Aorta (tissue), 5 donors: ENCODE measurements at regions of chr5 and their contacts with region 1.

Region 1: GRCh38 chr5:54492178-54492577 is 25.4 kb upstream of the SNX18 start:
- DNase-seq: no peak
- ATAC-seq: no peak
- H3K4me3 ChIP-seq: no peak overlapping the region
- H3K27ac ChIP-seq: no peak overlapping the region
- H3K4me1 ChIP-seq: no peaks in the 10 kb centered on the region
- H3K27me3 ChIP-seq: no peaks in the 10 kb centered on the region

Region 2: GRCh38 chr5:54243473-54244080 is 248.6 kb before region 1 on chr5:
- intact Hi-C with region 1: loop called (anchors 5 kb)
- DNase-seq: no peak
- ATAC-seq: no peak
- H3K4me3 ChIP-seq: no peak overlapping the region
- H3K27ac ChIP-seq: no peak overlapping the region
- H3K4me1 ChIP-seq: no peaks in the 10 kb centered on the region
- H3K27me3 ChIP-seq: no peaks in the 10 kb centered on the region

Region 3: DNA sequence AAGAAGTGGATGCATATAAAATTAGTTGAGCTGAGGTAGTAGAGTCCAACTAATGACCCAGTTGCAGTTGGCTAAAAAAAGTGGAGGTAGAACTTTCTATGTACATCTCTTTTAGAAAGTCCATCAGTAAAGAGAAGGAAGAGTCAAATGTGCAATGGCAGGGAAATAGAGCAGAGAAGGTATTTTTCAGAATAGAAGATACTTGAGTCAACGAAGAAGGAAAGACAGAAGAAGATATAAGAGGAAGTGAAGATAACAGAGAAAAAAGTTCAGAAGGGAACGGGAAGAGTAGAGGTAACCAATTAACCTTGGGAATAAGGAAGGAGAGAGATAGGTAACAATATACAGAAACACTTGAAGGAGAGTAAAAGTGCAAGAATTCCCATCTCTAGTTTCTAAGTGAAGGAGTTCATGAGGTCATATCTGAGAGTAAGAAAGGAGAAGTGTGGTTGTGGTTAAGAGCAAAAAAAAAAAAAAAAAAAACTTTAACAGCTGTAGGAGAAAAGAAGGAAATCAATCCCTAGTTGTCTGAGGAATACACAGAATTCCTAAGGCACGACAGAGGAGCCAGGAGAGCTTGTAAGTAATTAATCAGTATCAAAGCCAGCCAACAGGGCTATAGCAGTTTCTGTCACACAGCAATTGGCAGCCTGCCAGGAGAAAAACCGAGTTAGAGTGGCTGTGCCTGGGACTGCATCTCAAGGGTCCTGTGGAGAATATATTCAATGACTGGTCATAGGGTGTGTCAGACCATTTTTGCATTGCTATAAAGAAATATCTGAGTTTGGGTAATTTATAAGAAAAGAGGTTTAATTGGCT is 242.8 kb before region 1 on chr5:
- intact Hi-C with region 1: loop called (anchors 5 kb)
- DNase-seq: peak in 1 of 2 donors; percentile 48
- ATAC-seq: no peak
- H3K4me3 ChIP-seq: no peak overlapping the region
- H3K27ac ChIP-seq: no peak overlapping the region
- H3K4me1 ChIP-seq: no peaks in the 10 kb centered on the region
- H3K27me3 ChIP-seq: no peaks in the 10 kb centered on the region

Region 4: GRCh38 chr5:54443270-54443669 is 48.9 kb before region 1 on chr5:
- intact Hi-C with region 1: loop called in 1 of 2 experiments (anchors 2 kb)
- DNase-seq: no peak
- ATAC-seq: no peak
- H3K4me3 ChIP-seq: no peak overlapping the region
- H3K27ac ChIP-seq: no peak overlapping the region
- H3K4me1 ChIP-seq: peaks cover 2 to 7% of the 10 kb centered on the region in 2 donors
- H3K27me3 ChIP-seq: no peaks in the 10 kb centered on the region